ENCODE measurements at regions of chr1 and their contacts with region 1.

Region 1: GRCh38 chr1:89112871-89113613 is 12.9 kb downstream of the GBP2 start:
- DNase-seq: no peak
- ATAC-seq: no peak
- H3K4me3 ChIP-seq: no peak overlapping the region
- H3K27ac ChIP-seq: no peak overlapping the region
- H3K4me1 ChIP-seq: no peaks in the 10 kb centered on the region
- H3K27me3 ChIP-seq: no peaks in the 10 kb centered on the region

Region 2: GRCh38 chr1:89005286-89006151 is 107.5 kb before region 1 on chr1:
- intact Hi-C with region 1: loop called in 1 of 2 experiments (anchors 5 kb)
- DNase-seq: peak; percentile 59 to 82
- ATAC-seq: peak; percentile 74
- H3K4me3 ChIP-seq: no peak overlapping the region
- H3K27ac ChIP-seq: peak overlapping the region in 1 of 2 donors; percentile 17
- H3K4me1 ChIP-seq: no peaks in the 10 kb centered on the region
- H3K27me3 ChIP-seq: no peaks in the 10 kb centered on the region

Region 3: GRCh38 chr1:89171067-89171438 is 58.0 kb after region 1 on chr1:
- intact Hi-C with region 1: no loop called
- DNase-seq: no peak
- ATAC-seq: no peak
- H3K4me3 ChIP-seq: no peak overlapping the region
- H3K27ac ChIP-seq: no peak overlapping the region
- H3K4me1 ChIP-seq: no peaks in the 10 kb centered on the region
- H3K27me3 ChIP-seq: no peaks in the 10 kb centered on the region